ENCODE measurements at regions of chr1 and their contacts with region 1.

Region 1: GRCh38 chr1:39816415-39817090 is 27.9 kb upstream of the BMP8B start:
- DNase-seq: peak in 9 of 10 donors; percentile 46 to 78 (median 64)
- H3K4me3 ChIP-seq: no peak overlapping the region
- H3K27ac ChIP-seq: no peak overlapping the region
- H3K27me3 ChIP-seq: no peaks in the 10 kb centered on the region
- CTCF ChIP-seq: peak; percentile 59 to 91 (median 84)

Region 2: GRCh38 chr1:39919545-39919944 is 103.0 kb after region 1 on chr1:
- intact Hi-C with region 1: loop called in 1 of 2 experiments (anchors 5 kb)
- DNase-seq: peak in 6 of 10 donors; percentile 35 to 56 (median 46)
- H3K4me3 ChIP-seq: no peak overlapping the region
- H3K27ac ChIP-seq: no peak overlapping the region
- H3K27me3 ChIP-seq: no peaks in the 10 kb centered on the region
- CTCF ChIP-seq: peak; percentile 48 to 80 (median 66)